Activated CD4-positive, alpha-beta T cell treated with anti-CD3 and anti-CD28 coated beads, Interleukin-2, amount 10 ng/mL, durations not matched to agents 7 days and 5 days (primary cell): ENCODE measurements at regions of chr2 and their contacts with region 1.

Region 1: DNA sequence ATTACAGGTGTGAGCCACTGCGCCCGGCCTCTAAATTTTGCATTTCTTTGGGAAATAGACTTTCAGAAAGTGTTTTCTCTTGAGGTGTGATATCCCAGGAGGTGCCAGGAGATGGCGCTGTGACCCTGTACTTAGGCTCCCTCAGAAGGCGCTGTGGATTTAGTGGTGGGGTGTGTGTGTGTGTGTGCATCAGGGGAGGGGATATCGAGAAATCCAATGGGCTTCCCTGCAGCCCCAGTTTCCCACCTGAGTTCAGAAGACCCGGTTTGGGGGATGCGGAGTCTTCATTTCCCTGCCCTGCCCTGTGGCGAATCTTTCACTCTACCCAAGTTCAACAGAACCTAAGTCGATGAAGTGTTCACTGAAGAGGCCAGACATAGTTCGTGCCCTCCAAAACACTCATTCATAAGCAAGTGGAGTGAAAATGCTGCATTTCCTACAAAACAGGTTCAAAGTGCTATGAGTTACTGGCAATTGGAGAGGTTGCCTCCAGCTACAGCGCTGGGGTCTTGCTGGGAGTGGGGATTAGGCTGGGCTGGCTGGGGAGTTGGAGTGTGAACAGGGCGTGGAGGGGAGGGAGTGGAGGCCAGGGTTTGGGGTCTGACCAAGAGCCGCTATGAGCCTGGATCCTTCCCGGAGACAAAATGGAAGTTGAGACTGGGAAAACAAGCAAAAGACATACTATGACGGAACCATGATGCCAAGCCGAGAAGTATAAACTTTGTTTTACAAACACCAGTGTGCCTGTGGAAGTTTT is 6.5 kb upstream of the WNT6 start:
- DNase-seq: peak; percentile 53
- H3K4me3 Mint-ChIP-seq: no peak overlapping the region
- H3K27ac Mint-ChIP-seq: no peak overlapping the region
- H3K4me1 Mint-ChIP-seq: no peaks in the 10 kb centered on the region
- H3K27me3 Mint-ChIP-seq: peaks cover 61% of the 10 kb centered on the region

Region 2: GRCh38 chr2:218710687-218711549 is 142.2 kb before region 1 on chr2 and contains the start of gene TTLL4:
- CTCF ChIA-PET with region 1: interaction called, 14 read pairs
- POLR2A ChIA-PET with region 1: no interaction called
- DNase-seq: peak; percentile 98
- H3K4me3 Mint-ChIP-seq: peak within 1 kb of the TSS; percentile 98
- H3K27ac Mint-ChIP-seq: peak within 1 kb of the TSS; percentile 79
- H3K4me1 Mint-ChIP-seq: peaks cover 30% of the 10 kb centered on the region
- H3K27me3 Mint-ChIP-seq: peaks cover 10% of the 10 kb centered on the region
- total RNA-seq, gene TTLL4: 31.6 TPM

Region 3: GRCh38 chr2:218727502-218728165 is 125.5 kb before region 1 on chr2:
- CTCF ChIA-PET with region 1: interaction called, 26 read pairs
- POLR2A ChIA-PET with region 1: no interaction called
- DNase-seq: peak; percentile 16
- H3K4me3 Mint-ChIP-seq: no peak overlapping the region
- H3K27ac Mint-ChIP-seq: no peak overlapping the region
- H3K4me1 Mint-ChIP-seq: peaks cover 11% of the 10 kb centered on the region
- H3K27me3 Mint-ChIP-seq: no peaks in the 10 kb centered on the region

Region 4: DNA sequence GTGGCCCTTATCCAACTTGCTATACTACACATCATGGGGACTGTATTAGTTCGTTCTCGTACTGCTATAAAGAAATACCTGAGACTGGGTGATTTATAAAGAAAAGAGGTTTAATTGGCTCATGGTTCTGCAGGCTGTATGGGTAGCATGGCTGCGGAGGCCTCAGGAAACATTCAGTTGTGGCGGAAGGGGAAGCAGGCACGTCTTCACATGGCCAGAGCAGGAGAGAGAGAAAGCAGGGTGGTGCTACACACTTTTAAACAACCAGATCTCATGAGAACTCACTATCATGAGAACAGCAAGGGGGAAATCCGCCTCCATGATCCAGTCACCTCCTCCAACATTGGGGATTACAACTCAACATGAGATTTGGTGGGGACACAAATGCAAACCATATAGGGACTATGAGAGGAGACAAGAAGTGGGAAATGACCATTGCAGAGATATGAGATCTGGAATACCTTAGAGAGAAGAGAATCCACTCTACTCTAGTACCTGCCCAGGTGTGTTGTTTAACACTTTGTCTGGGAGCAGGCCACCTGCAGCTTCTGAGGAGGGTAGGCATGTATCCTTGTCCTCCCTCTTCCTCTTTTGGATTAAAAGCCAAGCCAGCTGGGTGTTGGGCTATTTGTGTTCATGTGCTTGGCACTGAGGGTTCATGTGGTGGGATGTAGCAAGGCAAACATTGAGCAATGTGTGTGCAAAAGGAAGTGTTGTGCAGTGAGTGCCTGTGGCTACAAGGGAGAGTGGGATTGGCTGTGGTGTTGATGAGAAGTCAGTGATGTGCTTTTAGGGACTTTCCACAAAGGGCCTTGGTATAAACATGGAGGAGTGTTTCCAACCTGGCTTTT is 119.7 kb before region 1 on chr2:
- CTCF ChIA-PET with region 1: interaction called, 26 read pairs
- POLR2A ChIA-PET with region 1: no interaction called
- DNase-seq: peak; percentile 10
- H3K4me3 Mint-ChIP-seq: no peak overlapping the region
- H3K27ac Mint-ChIP-seq: peak overlapping the region; percentile 28
- H3K4me1 Mint-ChIP-seq: peaks cover 22% of the 10 kb centered on the region
- H3K27me3 Mint-ChIP-seq: no peaks in the 10 kb centered on the region

Region 5: DNA sequence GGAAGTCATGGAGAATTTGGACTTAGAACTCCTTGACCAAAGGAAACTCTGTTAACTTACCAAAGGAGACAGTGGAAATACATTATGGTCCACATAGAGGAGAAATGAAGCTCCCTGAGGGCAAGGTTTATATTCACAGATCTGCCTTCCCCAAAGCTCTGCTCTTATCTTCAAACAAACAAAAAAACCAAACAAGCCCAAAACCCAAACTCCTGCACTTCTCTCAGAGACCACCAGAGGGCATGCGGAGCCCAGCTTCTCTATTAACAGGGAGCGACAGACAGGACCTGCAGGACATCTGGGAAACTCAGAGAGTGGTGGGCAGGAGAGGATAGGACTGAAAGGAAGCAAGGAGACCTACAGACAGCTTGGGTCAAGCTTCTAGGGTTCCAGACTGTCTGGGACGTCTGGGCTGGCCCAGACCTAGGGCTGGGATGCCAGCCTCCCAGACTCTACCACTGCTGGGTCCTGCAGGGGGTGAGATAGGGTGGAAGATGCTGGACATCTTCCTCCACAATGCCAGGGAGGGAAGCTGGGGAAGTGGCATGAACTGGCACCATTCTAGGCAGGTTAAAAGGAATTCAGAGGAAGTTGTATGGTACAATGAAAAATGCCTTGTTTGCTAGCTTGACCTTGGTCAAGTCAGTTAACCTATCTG is 23.6 kb after region 1 on chr2:
- CTCF ChIA-PET with region 1: interaction called, 12 read pairs
- POLR2A ChIA-PET with region 1: no interaction called
- DNase-seq: peak; percentile 67
- H3K4me3 Mint-ChIP-seq: no peak overlapping the region
- H3K27ac Mint-ChIP-seq: no peak overlapping the region
- H3K4me1 Mint-ChIP-seq: peaks cover 23% of the 10 kb centered on the region
- H3K27me3 Mint-ChIP-seq: peaks cover 72% of the 10 kb centered on the region

Region 6: DNA sequence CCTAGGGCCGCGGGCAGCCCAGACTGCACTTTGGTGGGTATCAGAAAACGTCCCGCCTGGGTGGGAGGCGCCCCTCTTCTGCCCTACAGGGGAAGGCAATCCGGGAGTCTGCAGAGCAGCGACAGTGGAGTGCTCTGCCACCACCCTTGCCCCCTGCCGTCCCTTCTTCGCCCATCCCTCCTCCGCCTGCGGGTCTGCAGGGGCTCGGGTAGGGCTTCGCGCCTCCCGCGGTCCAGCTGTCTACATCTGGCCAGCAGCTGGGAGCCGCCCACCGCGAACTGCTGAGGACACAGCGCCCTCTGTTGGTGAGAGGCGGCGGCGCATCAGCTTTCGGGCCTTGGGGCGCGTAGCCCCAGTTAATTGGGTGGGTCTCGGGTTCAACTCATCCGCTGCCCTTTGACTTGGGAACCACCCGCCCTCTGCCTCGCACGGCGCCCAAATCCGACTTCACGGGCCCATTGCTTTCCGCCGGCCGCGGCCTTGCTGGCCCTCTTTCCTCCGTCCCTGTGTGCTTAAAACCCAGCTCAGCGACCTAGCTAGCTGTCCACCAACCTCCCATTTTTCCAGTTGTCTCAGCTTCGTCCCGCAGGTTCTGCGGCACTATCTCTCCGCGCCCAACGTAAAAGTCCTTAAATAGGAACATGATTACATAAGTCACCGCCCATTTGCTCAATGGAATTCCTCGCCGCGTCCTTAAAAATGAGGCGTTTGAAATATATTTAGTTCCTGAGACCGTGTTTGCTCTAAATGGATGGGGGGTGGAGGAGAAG is 45.2 kb after region 1 on chr2:
- CTCF ChIA-PET with region 1: interaction called, 13 read pairs
- POLR2A ChIA-PET with region 1: no interaction called
- DNase-seq: peak; percentile 75
- H3K4me3 Mint-ChIP-seq: peak overlapping the region; percentile 58
- H3K27ac Mint-ChIP-seq: no peak overlapping the region
- H3K4me1 Mint-ChIP-seq: peaks cover 44% of the 10 kb centered on the region
- H3K27me3 Mint-ChIP-seq: peaks cover 64% of the 10 kb centered on the region